ENCODE measurements at regions of chrX and their contacts with region 1.

Region 1: DNA sequence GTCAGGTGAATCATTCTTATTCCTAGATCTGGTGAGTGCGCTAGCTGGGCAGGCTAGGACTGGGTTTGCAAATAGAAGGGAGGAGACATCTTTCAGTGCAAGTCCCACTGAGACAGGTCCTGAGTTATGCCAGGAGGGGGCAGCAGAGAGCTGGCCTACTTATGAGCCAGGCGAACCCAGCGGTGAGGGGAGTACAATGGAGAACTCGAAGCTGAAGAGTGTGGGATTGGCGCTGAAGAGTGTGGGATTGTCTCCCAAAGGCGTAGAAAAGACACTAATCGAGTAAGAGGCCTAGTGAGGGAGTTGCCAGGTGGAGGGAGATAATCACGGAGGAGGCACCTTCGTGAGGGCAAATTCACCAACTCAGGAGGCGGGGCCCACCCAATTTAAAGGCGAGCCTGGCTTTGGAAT is 91.7 kb upstream of the CXorf66 start:
- DNase-seq: peak; percentile 76
- ATAC-seq: peak; percentile 66
- H3K4me3 Mint-ChIP-seq: no peak overlapping the region
- H3K27ac Mint-ChIP-seq: no peak overlapping the region
- H3K4me1 Mint-ChIP-seq: no peaks in the 10 kb centered on the region
- H3K27me3 Mint-ChIP-seq: peaks cover 2% of the 10 kb centered on the region

Region 2: DNA sequence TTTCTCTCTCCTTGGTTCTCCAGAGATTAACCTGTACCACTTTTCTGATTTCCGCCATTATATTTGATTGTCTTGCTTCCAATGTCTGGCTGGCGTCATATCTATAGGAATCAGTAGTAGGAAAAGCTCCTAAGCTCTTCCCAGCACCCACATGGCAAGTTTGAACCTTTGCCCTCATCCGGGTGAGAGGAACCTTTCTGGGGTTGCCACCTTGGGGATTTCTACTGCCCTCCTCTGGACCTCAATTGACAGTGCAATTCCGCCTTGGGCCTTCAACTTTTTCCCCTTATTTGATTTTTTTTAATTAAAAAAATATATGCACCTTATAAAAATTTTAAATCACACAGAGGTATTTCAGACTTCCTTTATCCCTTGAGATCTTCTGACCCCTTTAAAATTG is 89.7 kb before region 1 on chrX:
- CTCF ChIA-PET with region 1: no interaction called
- POLR2A ChIA-PET with region 1: no interaction called
- intact Hi-C with region 1: no loop called
- DNase-seq: peak; percentile 7
- ATAC-seq: no peak
- H3K4me3 Mint-ChIP-seq: no peak overlapping the region
- H3K27ac Mint-ChIP-seq: no peak overlapping the region
- H3K4me1 Mint-ChIP-seq: no peaks in the 10 kb centered on the region
- H3K27me3 Mint-ChIP-seq: peaks cover 5% of the 10 kb centered on the region

Region 3: DNA sequence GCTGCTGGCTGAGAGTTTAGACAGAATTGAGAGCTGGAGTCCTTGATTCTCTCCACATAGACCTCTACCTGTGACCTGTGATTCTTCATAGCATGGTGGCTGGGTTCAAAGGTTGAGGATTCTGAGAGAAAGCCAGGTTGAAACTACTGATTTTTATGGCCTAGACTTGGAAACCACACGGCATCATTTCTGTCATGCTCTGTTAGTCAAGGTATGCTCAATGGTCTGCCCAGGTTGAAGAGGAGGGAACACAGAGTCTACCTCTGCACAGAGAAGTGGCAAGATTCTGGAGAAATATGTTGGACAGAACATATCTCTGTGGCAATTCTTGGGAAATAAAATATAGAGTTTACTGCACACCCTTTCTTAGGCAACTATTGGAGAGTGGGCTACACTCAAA is 34.5 kb before region 1 on chrX:
- CTCF ChIA-PET with region 1: no interaction called
- POLR2A ChIA-PET with region 1: no interaction called
- intact Hi-C with region 1: no loop called
- DNase-seq: no peak
- ATAC-seq: no peak
- H3K4me3 Mint-ChIP-seq: no peak overlapping the region
- H3K27ac Mint-ChIP-seq: no peak overlapping the region
- H3K4me1 Mint-ChIP-seq: no peaks in the 10 kb centered on the region
- H3K27me3 Mint-ChIP-seq: no peaks in the 10 kb centered on the region

Region 4: GRCh38 chrX:140141444-140142029 is 84.5 kb after region 1 on chrX:
- CTCF ChIA-PET with region 1: interaction called, 5 read pairs
- POLR2A ChIA-PET with region 1: no interaction called
- intact Hi-C with region 1: loop called (anchors 1 kb)
- DNase-seq: peak; percentile 41
- ATAC-seq: no peak
- H3K4me3 Mint-ChIP-seq: no peak overlapping the region
- H3K27ac Mint-ChIP-seq: no peak overlapping the region
- H3K4me1 Mint-ChIP-seq: no peaks in the 10 kb centered on the region
- H3K27me3 Mint-ChIP-seq: no peaks in the 10 kb centered on the region

Region 5: GRCh38 chrX:140664939-140665338 is 607.9 kb after region 1 on chrX:
- CTCF ChIA-PET with region 1: no interaction called
- POLR2A ChIA-PET with region 1: no interaction called
- intact Hi-C with region 1: loop called in 1 of 2 experiments (anchors 2 kb)
- DNase-seq: no peak
- ATAC-seq: no peak
- H3K4me3 Mint-ChIP-seq: no peak overlapping the region
- H3K27ac Mint-ChIP-seq: no peak overlapping the region
- H3K4me1 Mint-ChIP-seq: no peaks in the 10 kb centered on the region
- H3K27me3 Mint-ChIP-seq: no peaks in the 10 kb centered on the region

Measured in activated CD4-positive, alpha-beta T cell treated with anti-CD3 and anti-CD28 coated beads for 36 hours (primary cell).